Vagina (tissue), 2 donors: ENCODE measurements at regions of chr12 and their contacts with region 1.

Region 1: GRCh38 chr12:108664338-108665258 is 30.9 kb upstream of the SELPLG start:
- DNase-seq: no peak
- H3K4me3 ChIP-seq: no peak overlapping the region
- H3K27ac ChIP-seq: peak overlapping the region; percentile 89
- H3K4me1 ChIP-seq: peaks cover 58% of the 10 kb centered on the region
- H3K27me3 ChIP-seq: no peaks in the 10 kb centered on the region
- CTCF ChIP-seq: peak; percentile 75 to 98 (median 87)
- POLR2A ChIP-seq: no peak

Region 2: DNA sequence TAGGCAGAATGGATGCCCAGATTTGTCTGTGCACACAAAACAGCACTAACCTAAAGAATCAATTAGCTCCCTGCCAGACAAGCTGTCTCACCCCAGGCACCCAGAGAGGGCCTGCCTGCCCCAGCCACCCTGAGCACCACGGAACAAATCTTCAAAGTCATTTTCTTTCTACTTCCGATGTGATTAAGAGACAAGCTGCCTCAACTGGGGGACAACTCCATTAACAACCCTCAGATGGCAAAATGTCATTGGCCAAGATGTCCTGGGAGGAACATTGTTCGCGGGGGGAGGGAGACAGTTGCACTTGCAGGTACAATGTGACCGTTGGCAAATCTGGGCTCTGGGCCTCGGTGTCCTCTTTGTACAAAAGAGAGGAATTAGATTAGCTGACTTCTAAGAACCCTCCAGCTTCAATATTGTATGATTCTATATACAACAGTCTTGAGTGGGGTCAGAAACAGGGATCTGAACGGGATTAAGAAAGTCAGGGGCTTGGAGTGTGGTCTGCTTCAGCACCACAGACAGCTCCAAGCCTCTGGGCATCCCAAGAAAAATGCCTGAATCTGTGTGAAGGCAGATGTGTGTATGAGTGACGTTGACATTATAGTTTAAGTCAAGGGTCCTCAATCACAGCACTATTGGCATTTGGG is 282.7 kb before region 1 on chr12:
- intact Hi-C with region 1: no loop called
- DNase-seq: no peak
- H3K4me3 ChIP-seq: no peak overlapping the region
- H3K27ac ChIP-seq: no peak overlapping the region
- H3K4me1 ChIP-seq: no peaks in the 10 kb centered on the region
- H3K27me3 ChIP-seq: no peaks in the 10 kb centered on the region
- CTCF ChIP-seq: no peak
- POLR2A ChIP-seq: no peak

Region 3: GRCh38 chr12:108803428-108804105 is 139.0 kb after region 1 on chr12:
- intact Hi-C with region 1: loop called (anchors 2 kb)
- DNase-seq: no peak
- H3K4me3 ChIP-seq: no peak overlapping the region
- H3K27ac ChIP-seq: peak overlapping the region; percentile 89
- H3K4me1 ChIP-seq: peaks cover 48% of the 10 kb centered on the region
- H3K27me3 ChIP-seq: no peaks in the 10 kb centered on the region
- CTCF ChIP-seq: peak; percentile 88 to 98 (median 97)
- POLR2A ChIP-seq: no peak